ENCODE measurements at regions of chr11 and their contacts with region 1.

Region 1: DNA sequence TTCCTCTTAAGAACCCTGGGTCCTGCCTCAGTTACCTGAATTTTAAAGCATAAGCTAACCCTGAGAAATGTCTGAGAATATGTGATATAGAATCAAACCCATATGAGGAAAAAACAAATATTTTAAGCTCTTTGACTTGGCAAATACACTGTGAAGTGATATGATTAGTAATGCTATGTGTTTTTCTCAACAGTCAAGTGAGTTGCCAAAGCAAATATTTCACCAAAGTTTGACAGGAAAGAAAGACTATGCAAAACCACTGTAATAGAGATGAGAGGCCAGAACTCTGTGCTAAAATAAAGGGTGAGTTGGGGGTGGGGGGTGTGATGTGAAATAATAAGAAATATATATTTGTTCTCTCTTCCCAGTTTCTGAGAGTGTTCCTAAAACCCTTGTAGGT is 613.5 kb upstream of the CCDC179 start:
- DNase-seq: no peak
- H3K4me3 Mint-ChIP-seq: no peak overlapping the region
- H3K27ac Mint-ChIP-seq: no peak overlapping the region
- H3K4me1 Mint-ChIP-seq: no peaks in the 10 kb centered on the region
- H3K27me3 Mint-ChIP-seq: no peaks in the 10 kb centered on the region

Region 2: GRCh38 chr11:23413057-23413456 is 60.7 kb before region 1 on chr11:
- intact Hi-C with region 1: loop called (anchors 10 kb)
- DNase-seq: no peak
- H3K4me3 Mint-ChIP-seq: no peak overlapping the region
- H3K27ac Mint-ChIP-seq: no peak overlapping the region
- H3K4me1 Mint-ChIP-seq: no peaks in the 10 kb centered on the region
- H3K27me3 Mint-ChIP-seq: no peaks in the 10 kb centered on the region

Region 3: GRCh38 chr11:23425381-23425780 is 48.4 kb before region 1 on chr11:
- intact Hi-C with region 1: no loop called
- DNase-seq: no peak
- H3K4me3 Mint-ChIP-seq: no peak overlapping the region
- H3K27ac Mint-ChIP-seq: no peak overlapping the region
- H3K4me1 Mint-ChIP-seq: no peaks in the 10 kb centered on the region
- H3K27me3 Mint-ChIP-seq: no peaks in the 10 kb centered on the region